Activated CD8-positive, alpha-beta T cell treated with anti-CD3 and anti-CD28 coated beads, Interleukin-2, amount 10 ng/mL, durations not matched to agents 7 days and 5 days (primary cell): ENCODE measurements at regions of chr2 and their contacts with region 1.

Region 1: DNA sequence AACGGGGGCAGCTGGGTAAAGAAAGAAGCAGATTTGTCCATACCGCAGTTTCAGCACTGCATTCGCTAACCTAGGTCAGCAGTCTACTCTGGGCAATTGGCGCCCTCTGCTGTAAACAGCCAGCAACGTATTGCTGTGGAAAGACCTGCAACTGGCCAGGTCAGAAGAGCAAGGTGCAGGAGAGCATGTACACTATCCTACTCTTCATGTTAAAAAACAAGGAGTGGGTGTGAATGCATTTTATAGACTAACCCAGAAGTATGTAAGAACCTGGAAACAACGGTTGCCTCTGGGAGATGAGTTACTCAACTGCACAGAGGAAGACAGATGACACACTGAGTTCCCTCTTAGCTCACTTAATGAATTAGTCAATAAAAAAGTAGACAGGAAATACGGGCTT is 6.2 kb downstream of the MRPS5 start:
- DNase-seq: peak; percentile 86
- ATAC-seq: peak; percentile 100
- H3K4me3 Mint-ChIP-seq: no peak overlapping the region
- H3K27ac Mint-ChIP-seq: peak overlapping the region; percentile 27
- H3K4me1 Mint-ChIP-seq: peaks cover 44% of the 10 kb centered on the region
- H3K27me3 Mint-ChIP-seq: no peaks in the 10 kb centered on the region

Region 2: DNA sequence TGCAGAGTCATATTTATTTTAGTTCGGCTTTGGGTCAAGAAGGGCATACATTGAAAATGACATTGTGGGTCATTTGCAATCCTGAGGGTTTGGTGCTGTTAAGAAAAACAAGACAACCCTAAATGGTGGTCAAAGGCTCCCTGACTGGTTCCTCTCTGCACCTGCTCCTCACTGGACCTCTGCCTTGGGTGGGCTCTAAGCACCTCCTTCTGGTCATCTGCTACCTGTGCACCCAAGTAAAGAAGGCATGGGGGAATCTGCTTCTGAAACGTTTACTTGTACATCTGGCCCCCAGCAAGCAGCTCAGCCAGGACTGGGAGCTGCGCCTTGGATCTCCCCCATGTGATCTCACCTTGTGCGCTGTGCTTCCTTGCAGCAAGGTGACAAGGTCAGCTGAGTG is 145.1 kb before region 1 on chr2:
- CTCF ChIA-PET with region 1: no interaction called
- POLR2A ChIA-PET with region 1: no interaction called
- DNase-seq: no peak
- ATAC-seq: no peak
- H3K4me3 Mint-ChIP-seq: no peak overlapping the region
- H3K27ac Mint-ChIP-seq: no peak overlapping the region
- H3K4me1 Mint-ChIP-seq: no peaks in the 10 kb centered on the region
- H3K27me3 Mint-ChIP-seq: peaks cover 27% of the 10 kb centered on the region

Region 3: DNA sequence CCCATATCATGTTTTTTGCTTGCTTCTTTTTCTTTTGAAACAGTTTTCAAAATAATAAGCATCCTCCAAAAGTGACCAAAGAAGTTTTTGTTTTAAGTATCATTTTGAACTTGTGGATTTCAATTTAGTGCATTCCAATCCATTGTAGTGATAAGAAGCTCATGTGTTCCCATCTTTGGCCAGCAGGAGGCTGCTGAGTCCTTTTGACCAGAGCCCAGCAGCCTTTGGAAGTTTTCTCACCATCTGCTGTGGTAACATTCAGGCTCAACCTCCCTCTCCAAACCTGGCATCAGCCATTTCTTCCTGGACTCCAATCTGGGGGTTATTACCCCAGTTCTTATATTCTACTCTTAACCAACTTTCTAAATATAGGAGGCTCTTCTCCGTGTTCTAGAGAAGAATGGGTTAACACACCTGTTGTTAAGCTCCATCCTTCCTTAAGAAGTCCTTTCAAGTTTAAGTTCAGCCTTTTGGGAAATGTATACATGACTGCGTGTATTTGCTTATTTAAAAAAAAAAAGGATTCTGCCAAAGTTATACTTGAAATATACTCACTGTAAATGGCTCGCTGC is 128.9 kb before region 1 on chr2:
- CTCF ChIA-PET with region 1: interaction called, 29 read pairs
- POLR2A ChIA-PET with region 1: no interaction called
- DNase-seq: peak; percentile 67
- ATAC-seq: peak; percentile 79
- H3K4me3 Mint-ChIP-seq: no peak overlapping the region
- H3K27ac Mint-ChIP-seq: no peak overlapping the region
- H3K4me1 Mint-ChIP-seq: peaks cover 6% of the 10 kb centered on the region
- H3K27me3 Mint-ChIP-seq: peaks cover 10% of the 10 kb centered on the region

Region 4: GRCh38 chr2:95012881-95013550 is 102.4 kb before region 1 on chr2:
- CTCF ChIA-PET with region 1: interaction called, 24 read pairs
- POLR2A ChIA-PET with region 1: interaction called, 3 read pairs
- DNase-seq: no peak
- ATAC-seq: no peak
- H3K4me3 Mint-ChIP-seq: no peak overlapping the region
- H3K27ac Mint-ChIP-seq: no peak overlapping the region
- H3K4me1 Mint-ChIP-seq: peaks cover 32% of the 10 kb centered on the region
- H3K27me3 Mint-ChIP-seq: no peaks in the 10 kb centered on the region

Region 5: GRCh38 chr2:95053543-95053942 is 61.9 kb before region 1 on chr2:
- CTCF ChIA-PET with region 1: interaction called, 14 read pairs
- POLR2A ChIA-PET with region 1: no interaction called
- DNase-seq: no peak
- ATAC-seq: no peak
- H3K4me3 Mint-ChIP-seq: no peak overlapping the region
- H3K27ac Mint-ChIP-seq: peak overlapping the region; percentile 61
- H3K4me1 Mint-ChIP-seq: peaks cover 78% of the 10 kb centered on the region
- H3K27me3 Mint-ChIP-seq: no peaks in the 10 kb centered on the region

Region 6: DNA sequence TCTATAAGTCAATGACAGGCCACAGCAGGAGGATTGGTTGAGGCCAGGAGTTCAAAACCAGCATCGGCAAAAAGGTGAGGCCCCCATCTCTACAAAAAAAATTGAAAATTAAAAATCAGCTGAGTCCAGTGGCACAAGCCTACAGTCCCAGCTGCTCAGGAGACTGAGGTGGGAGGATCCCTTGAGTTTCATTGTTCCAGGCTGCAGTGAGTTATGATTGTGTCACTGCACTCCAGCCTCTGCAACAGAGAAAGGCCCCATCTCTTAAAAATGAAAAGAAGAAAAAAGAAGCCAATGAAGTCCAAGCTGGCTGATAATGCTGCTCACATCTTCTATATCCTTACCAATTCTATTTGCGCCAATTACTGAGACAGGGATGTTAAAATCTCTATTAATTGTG is 32.9 kb before region 1 on chr2:
- CTCF ChIA-PET with region 1: interaction called, 178 read pairs
- POLR2A ChIA-PET with region 1: interaction called, 6 read pairs
- DNase-seq: no peak
- ATAC-seq: no peak
- H3K4me3 Mint-ChIP-seq: no peak overlapping the region
- H3K27ac Mint-ChIP-seq: no peak overlapping the region
- H3K4me1 Mint-ChIP-seq: peaks cover 24% of the 10 kb centered on the region
- H3K27me3 Mint-ChIP-seq: no peaks in the 10 kb centered on the region